Natural killer cell (primary cell): ENCODE measurements at regions of chrX and their contacts with region 1.

Region 1: DNA sequence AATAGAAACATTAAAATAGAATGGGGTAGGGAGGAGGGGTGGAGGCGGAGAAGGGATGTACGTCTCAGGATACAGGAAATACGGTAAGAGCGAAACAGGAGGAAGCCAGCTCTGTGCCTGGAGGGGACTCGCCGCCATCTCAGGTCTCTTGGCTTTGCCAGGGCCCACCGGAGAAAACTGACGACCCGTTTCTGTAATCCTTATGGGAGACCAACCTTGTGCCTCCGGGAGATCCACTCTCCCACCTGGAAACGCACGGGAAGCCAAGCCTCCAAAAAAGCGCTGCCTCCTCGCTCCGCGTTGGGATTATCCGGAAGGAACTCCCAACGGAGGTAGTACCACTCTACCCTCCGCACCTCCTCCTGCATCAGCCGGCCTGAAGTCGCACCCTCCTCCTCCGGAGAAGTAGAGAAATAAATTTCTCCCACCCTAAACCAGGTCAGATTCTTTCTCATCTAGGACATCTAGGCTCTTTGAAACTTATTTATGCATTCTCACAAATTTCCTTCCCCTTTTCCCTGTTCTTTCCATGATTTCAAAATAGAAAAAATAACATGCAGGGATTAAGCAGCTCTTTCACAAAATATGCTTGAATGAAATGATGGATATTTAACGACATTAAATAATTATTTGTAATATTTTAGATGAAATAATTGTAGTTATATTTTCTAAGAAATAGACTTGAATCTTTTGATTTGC is at the start of gene NBDY:
- DNase-seq: peak; percentile 16 to 65
- ATAC-seq: peak; percentile 58 to 66 (median 66)
- H3K4me3 ChIP-seq: peak within 1 kb of the TSS; percentile 58
- H3K4me3 Mint-ChIP-seq: peak within 1 kb of the TSS; percentile 92
- H3K27ac ChIP-seq: peak within 1 kb of the TSS; percentile 74
- H3K27ac Mint-ChIP-seq: peak within 1 kb of the TSS; percentile 63 to 90
- H3K4me1 ChIP-seq: peaks cover 11% of the 10 kb centered on the region
- H3K4me1 Mint-ChIP-seq: peaks cover 9 to 13% of the 10 kb centered on the region in 2 donors
- H3K27me3 ChIP-seq: no peaks in the 10 kb centered on the region
- H3K27me3 Mint-ChIP-seq: peaks cover 0 to 6% of the 10 kb centered on the region in 2 donors
- CTCF ChIP-seq: no peak
- total RNA-seq, gene NBDY: 16.0 to 23.6 (median 16.6) TPM

Region 2: DNA sequence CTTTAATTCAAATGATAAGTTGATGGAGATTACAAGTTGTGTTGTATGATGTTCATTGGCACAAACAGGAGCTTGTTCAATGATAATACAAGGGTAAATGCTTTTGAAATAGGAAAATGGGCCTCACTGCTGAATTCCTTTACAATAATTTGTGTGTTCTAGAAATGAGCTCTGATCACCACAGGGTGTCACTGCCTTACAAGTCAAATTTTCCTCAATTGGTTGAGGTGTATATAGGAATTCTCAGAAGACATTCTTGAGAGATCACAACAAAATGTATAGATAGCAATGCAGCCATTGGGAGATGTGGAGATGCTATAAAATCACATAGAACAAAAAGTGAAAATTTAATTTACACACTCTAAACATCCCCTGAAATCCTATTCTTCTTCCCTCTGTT is 447.5 kb before region 1 on chrX:
- intact Hi-C with region 1: loop called (anchors 5 kb)
- DNase-seq: peak in 1 of 2 donors; percentile 69
- ATAC-seq: no peak
- H3K4me3 ChIP-seq: no peak overlapping the region
- H3K4me3 Mint-ChIP-seq: no peak overlapping the region
- H3K27ac ChIP-seq: no peak overlapping the region
- H3K27ac Mint-ChIP-seq: no peak overlapping the region
- H3K4me1 ChIP-seq: no peaks in the 10 kb centered on the region
- H3K4me1 Mint-ChIP-seq: no peaks in the 10 kb centered on the region
- H3K27me3 ChIP-seq: no peaks in the 10 kb centered on the region
- H3K27me3 Mint-ChIP-seq: peaks cover 0 to 5% of the 10 kb centered on the region in 2 donors
- CTCF ChIP-seq: no peak

Region 3: GRCh38 chrX:56462389-56462788 is 266.9 kb before region 1 on chrX:
- intact Hi-C with region 1: loop called (anchors 5 kb)
- DNase-seq: no peak
- ATAC-seq: no peak
- H3K4me3 ChIP-seq: no peak overlapping the region
- H3K4me3 Mint-ChIP-seq: no peak overlapping the region
- H3K27ac ChIP-seq: no peak overlapping the region
- H3K27ac Mint-ChIP-seq: no peak overlapping the region
- H3K4me1 ChIP-seq: no peaks in the 10 kb centered on the region
- H3K4me1 Mint-ChIP-seq: no peaks in the 10 kb centered on the region
- H3K27me3 ChIP-seq: no peaks in the 10 kb centered on the region
- H3K27me3 Mint-ChIP-seq: peaks cover 6 to 31% of the 10 kb centered on the region in 2 donors
- CTCF ChIP-seq: no peak

Region 4: DNA sequence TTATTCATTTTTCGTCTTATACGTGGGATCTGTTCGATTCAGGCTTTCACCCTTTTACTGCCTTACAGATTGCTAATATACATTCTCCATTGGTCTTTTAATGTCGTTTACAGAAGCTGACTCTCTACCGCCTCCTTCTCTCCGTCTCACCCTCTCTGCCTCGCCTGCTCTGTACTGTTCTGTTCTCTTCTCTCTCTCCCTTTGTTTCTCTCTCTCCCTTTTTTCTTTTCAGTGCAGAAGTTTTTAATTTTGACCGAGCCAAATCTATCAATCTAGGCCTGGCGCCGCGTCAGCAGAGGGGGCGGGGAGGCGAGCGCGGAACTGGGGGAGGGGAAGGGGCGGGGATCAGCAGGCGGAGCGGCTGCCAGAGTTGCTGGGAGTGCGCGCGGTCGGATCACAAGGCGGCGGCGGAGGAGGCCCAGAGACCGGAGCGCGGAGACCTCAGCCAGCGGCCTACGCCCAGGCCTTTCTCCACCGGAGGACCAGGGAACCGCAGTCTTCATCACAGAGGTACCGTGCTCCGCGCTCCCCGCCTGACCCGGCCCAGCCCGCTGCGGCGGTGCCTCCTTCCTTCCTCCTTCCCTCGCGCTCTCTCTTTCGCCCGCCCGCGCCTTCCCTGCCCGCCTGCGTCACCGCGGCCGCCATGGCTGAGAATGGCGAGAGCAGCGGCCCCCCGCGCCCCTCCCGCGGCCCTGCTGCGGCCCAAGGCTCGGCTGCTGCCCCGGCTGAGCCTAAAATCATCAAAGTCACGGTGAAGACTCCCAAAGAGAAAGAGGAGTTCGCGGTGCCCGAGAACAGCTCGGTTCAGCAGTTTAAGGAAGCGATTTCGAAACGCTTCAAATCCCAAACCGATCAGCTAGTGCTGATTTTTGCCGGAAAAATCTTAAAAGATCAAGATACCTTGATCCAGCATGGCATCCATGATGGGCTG is 165.8 kb before region 1 on chrX and contains the start of gene UBQLN2:
- intact Hi-C with region 1: loop called (anchors 5 kb)
- DNase-seq: peak; percentile 69 to 86
- ATAC-seq: peak; percentile 83 to 93 (median 86)
- H3K4me3 ChIP-seq: peak within 1 kb of the TSS; percentile 73
- H3K4me3 Mint-ChIP-seq: peak within 1 kb of the TSS; percentile 85
- H3K27ac ChIP-seq: peak within 1 kb of the TSS; percentile 98
- H3K27ac Mint-ChIP-seq: peak within 1 kb of the TSS; percentile 92 to 93
- H3K4me1 ChIP-seq: peaks cover 9% of the 10 kb centered on the region
- H3K4me1 Mint-ChIP-seq: peaks cover 18 to 27% of the 10 kb centered on the region in 2 donors
- H3K27me3 ChIP-seq: no peaks in the 10 kb centered on the region
- H3K27me3 Mint-ChIP-seq: peaks cover 2 to 6% of the 10 kb centered on the region in 2 donors
- CTCF ChIP-seq: no peak
- total RNA-seq, gene UBQLN2: 36.2 to 43.4 (median 39.7) TPM